ENCODE measurements at regions of chr10 and their contacts with region 1.

Region 1: GRCh38 chr10:92517034-92517655 is 56.7 kb downstream of the IDE start:
- DNase-seq: no peak
- ATAC-seq: peak; percentile 87

Region 2: DNA sequence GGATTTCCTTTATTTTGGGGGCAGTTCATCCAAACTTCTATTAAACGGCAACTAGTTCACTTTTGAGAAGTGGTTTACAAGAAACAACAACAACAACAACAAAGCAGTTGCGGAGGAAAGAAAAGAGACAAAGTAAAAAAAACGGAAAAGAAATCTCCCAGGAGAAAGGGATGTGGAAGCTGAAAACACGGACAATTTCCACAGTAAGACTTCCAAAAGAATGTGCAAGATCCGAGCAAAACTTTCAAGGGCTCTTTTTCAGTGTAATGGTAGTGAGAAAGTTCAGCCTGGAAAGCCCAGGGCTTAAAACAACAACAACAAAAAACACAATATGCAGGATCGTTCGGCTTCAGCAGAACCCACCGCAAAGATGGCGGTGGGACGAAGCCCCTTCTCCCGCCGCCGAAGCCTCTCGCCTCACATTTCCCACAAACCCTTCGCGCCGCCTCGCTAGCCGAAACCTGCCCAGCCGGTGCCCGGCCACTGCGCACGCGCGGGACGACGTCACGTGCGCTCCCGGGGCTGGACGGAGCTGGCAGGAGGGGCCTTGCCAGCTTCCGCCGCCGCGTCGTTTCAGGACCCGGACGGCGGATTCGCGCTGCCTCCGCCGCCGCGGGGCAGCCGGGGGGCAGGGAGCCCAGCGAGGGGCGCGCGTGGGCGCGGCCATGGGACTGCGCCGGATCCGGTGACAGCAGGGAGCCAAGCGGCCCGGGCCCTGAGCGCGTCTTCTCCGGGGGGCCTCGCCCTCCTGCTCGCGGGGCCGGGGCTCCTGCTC is 719.1 kb before region 1 on chr10 and contains the start of gene TNKS2:
- intact Hi-C with region 1: no loop called
- DNase-seq: peak; percentile 97
- ATAC-seq: peak; percentile 97
- total RNA-seq, gene TNKS2: 12.2 TPM

Region 3: DNA sequence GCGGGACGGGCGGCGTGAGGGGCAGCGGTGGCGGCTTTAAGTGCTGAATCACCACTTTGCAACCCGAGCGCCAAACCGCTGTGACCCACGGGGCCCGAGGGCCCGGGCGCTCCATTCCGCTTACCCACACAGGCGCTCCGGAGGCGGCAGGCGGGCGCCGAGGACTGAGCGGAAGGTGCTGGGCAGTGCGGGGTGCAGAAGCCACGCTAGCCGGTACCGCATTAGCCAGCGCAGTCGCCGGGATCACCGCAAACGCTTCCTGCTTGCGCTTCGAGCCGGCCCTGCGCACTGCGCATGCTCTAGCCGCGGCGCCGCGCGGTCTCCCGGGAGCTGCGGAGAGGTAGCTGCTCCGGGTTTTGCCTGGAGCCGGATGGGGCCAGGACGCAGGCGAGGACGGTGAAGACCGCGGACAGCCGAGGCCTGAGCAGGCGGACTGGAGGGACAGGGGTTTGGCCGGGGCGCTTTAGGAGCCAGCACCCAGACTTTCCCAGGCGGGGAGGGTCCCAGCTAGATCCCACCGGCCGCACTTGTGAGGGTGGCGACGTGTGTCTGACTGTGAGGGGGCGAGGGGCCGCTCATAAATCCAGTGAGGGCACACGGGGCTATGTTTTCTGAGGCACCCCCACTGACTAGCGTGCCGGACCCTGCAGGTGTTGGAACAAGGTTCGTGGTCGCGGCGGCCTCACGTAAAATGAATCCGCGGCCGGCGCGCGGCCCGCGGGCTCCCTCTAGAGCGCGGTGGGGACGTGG is 56.8 kb after region 1 on chr10 and contains the start of gene IDE:
- intact Hi-C with region 1: loop called (anchors 2 kb)
- DNase-seq: peak; percentile 94
- ATAC-seq: peak; percentile 98
- total RNA-seq, gene IDE: 50.5 TPM

Region 4: DNA sequence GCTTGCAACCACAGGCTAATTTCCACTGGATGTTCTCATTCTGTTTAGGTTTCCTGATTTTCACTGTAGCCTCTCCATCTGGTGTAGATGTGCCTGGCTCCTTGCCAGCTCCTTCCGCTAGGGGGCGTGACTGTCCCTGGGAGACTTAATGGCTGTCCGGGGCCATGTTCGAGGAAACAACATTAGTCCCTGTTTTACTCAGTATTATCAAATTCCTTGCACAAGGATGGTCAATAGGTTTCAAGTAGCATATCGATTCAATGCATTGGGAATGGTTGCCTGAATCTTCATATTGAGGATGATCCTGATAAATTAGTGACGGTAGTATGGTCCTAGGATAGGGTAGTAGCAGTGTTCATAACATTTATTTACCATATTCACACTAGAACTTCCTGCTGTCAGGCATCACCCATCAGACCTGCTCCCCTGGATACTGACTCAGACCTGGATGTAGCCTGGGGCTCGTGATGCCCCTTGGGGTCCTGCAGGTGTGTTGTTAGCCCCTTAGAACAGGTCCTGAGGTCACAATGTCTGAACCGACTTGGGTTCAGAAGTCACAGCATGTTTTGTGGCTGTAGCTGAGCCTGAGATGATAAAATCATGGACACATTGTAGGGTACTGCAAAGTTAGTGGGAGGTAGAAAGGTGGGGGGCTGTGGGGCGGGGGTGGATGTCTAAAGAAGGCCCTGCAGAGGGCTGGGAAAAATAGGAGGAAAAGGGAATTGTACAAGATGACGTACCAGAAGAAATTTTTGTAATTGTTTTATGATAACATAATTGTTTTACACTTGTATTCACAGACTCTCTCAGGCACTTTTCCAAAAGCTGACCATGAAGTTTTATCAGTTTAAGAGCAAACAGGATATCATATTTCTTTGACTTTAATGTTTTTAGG is 322.3 kb after region 1 on chr10:
- intact Hi-C with region 1: no loop called
- DNase-seq: peak; percentile 82
- ATAC-seq: no peak